ENCODE measurements at regions of chr2 and their contacts with region 1.

Region 1: GRCh38 chr2:7427293-7428060 is 510.3 kb downstream of the RNF144A start:
- DNase-seq: peak; percentile 41 to 60
- ATAC-seq: peak in 1 of 2 experiments; percentile 57; a peak in 4 of 6 replicates
- H3K4me3 ChIP-seq: no peak overlapping the region
- H3K27ac ChIP-seq: no peak overlapping the region
- H3K4me1 ChIP-seq: no peaks in the 10 kb centered on the region
- CTCF ChIP-seq: peak; percentile 87
- EP300 ChIP-seq: no peak
- POLR2A ChIP-seq: no peak
- RAD21 ChIP-seq: peak; percentile 90 to 94

Region 2: GRCh38 chr2:7097348-7097895 is 330.1 kb before region 1 on chr2:
- CTCF ChIA-PET with region 1: interaction called, 19 read pairs
- POLR2A ChIA-PET with region 1: no interaction called
- DNase-seq: peak; percentile 64 to 72
- ATAC-seq: peak; percentile 87 to 97
- H3K4me3 ChIP-seq: peak overlapping the region; percentile 11; the same call in 1 of the 3 replicates
- H3K27ac ChIP-seq: peak overlapping the region in 1 of 2 experiments; percentile 15; a peak in 1 of 6 replicates
- H3K4me1 ChIP-seq: no peaks in the 10 kb centered on the region
- CTCF ChIP-seq: peak; percentile 97
- EP300 ChIP-seq: no peak
- POLR2A ChIP-seq: no peak
- RAD21 ChIP-seq: peak; percentile 97 to 98

Region 3: DNA sequence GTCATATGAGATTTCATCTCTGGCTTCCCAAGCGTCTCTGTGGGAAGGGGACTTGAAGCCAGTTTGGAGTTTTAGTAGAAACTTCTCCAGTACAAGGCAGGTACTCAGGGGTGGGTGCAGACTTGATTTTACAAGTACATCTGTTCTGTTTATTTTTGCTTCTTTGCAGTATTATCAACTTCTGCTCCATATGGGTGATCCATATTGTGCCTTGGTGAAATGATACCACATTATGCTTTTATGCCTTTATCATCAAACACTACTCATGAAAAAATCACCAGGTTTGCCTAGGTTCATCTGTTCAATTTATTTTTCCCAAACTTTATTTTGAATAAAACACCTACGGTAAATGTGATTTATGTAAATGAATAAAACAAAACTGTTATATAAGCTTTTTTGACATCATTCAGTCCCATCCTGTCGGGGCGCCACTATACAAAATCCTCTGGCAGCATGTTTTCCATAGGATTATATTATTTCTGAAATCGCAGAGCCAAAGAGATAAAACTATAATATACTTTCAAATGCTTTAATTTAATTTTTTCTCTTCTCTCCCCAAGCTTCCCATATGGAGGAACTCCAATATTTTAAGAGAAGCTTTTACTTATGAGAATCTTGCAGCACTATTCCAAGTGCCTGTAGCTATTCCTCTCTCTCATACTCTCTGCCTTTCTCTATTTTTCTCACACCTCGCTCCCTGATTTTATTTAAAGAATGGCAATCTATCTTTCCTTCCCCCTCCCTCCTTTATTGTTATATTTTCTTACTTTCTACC is 19.4 kb before region 1 on chr2:
- CTCF ChIA-PET with region 1: interaction called, 13 read pairs
- POLR2A ChIA-PET with region 1: no interaction called
- DNase-seq: no peak
- ATAC-seq: no peak
- H3K4me3 ChIP-seq: no peak overlapping the region
- H3K27ac ChIP-seq: no peak overlapping the region
- H3K4me1 ChIP-seq: no peaks in the 10 kb centered on the region
- CTCF ChIP-seq: no peak
- EP300 ChIP-seq: no peak
- POLR2A ChIP-seq: no peak
- RAD21 ChIP-seq: no peak

Region 4: DNA sequence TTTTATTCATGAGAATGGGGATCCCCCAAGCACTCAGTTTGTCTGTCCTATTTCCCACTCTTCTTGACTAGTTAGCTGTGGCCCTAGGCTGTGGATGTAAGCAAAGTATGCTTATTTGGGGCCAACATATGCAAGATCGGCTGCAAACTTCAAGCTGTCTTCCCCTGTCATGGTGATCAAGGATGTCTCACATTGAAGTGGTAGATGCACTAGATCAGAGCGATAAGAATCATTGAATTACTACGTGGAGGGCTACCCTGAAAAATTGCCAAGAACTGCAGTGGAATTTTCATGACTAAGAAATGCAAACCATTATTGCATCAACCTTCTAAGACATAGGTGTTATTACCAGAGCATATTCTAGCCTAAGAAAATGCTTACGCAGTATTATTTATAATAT is 17.1 kb after region 1 on chr2:
- CTCF ChIA-PET with region 1: interaction called, 32 read pairs
- POLR2A ChIA-PET with region 1: no interaction called
- DNase-seq: no peak
- ATAC-seq: no peak
- H3K4me3 ChIP-seq: no peak overlapping the region
- H3K27ac ChIP-seq: no peak overlapping the region
- H3K4me1 ChIP-seq: no peaks in the 10 kb centered on the region
- CTCF ChIP-seq: no peak
- EP300 ChIP-seq: no peak
- POLR2A ChIP-seq: no peak
- RAD21 ChIP-seq: no peak

Region 5: GRCh38 chr2:7456762-7457161 is 29.3 kb after region 1 on chr2:
- CTCF ChIA-PET with region 1: no interaction called
- POLR2A ChIA-PET with region 1: no interaction called
- DNase-seq: no peak
- ATAC-seq: no peak; a peak in 1 of 6 replicates
- H3K4me3 ChIP-seq: no peak overlapping the region
- H3K27ac ChIP-seq: no peak overlapping the region
- H3K4me1 ChIP-seq: no peaks in the 10 kb centered on the region
- CTCF ChIP-seq: no peak
- EP300 ChIP-seq: no peak
- POLR2A ChIP-seq: no peak
- RAD21 ChIP-seq: no peak

Region 6: GRCh38 chr2:7930800-7931635 is 503.5 kb after region 1 on chr2:
- CTCF ChIA-PET with region 1: no interaction called
- POLR2A ChIA-PET with region 1: no interaction called
- DNase-seq: no peak
- ATAC-seq: no peak
- H3K4me3 ChIP-seq: no peak overlapping the region
- H3K27ac ChIP-seq: no peak overlapping the region
- H3K4me1 ChIP-seq: no peaks in the 10 kb centered on the region
- CTCF ChIP-seq: no peak
- EP300 ChIP-seq: no peak
- POLR2A ChIP-seq: no peak
- RAD21 ChIP-seq: no peak

Region 7: DNA sequence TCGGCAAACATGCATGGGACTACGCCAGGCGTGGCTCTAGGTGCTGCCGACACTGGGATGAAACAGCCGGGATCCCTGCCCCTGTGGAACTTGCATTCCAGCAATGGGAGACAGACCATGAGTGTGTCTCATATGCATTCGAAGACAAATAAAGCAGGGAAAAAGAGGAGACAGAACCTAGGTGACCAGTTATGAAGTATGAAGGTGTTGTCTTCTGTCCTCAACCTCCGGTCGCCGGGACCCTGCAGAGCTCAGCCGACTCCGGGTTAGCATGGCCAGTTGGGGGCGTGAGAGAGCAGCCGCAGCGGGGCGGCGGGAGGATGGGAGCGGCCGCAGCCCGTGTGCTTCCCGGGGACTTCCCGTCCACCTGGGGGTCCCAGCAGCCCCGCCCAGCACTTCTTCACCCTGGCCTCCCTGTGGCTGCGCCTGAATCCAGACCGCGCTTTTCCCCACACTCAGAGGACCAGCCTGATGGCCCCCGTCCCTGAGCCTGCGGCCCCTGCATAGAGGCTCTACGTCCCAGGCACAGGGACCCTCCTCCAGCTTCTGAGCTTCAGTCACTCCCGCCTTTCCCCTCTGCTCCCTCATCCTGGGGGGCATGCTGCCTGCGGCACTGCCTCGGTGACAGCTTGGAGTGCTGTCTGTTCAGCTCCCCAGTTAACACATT is 1265.8 kb after region 1 on chr2:
- CTCF ChIA-PET with region 1: interaction called, 56 read pairs
- POLR2A ChIA-PET with region 1: no interaction called
- DNase-seq: peak; percentile 55 to 65
- ATAC-seq: peak; percentile 95 to 96
- H3K4me3 ChIP-seq: peak overlapping the region; percentile 43
- H3K27ac ChIP-seq: peak overlapping the region; percentile 60 to 86
- H3K4me1 ChIP-seq: peaks cover 10% of the 10 kb centered on the region; the same call in 1 of the 3 replicates
- CTCF ChIP-seq: peak; percentile 93
- EP300 ChIP-seq: no peak
- POLR2A ChIP-seq: no peak
- RAD21 ChIP-seq: peak; percentile 64 to 68

Measured in A549 (cell line).